Endothelial cell of umbilical vein (primary cell): ENCODE measurements at regions of chr15 and their contacts with region 1.

Region 1: DNA sequence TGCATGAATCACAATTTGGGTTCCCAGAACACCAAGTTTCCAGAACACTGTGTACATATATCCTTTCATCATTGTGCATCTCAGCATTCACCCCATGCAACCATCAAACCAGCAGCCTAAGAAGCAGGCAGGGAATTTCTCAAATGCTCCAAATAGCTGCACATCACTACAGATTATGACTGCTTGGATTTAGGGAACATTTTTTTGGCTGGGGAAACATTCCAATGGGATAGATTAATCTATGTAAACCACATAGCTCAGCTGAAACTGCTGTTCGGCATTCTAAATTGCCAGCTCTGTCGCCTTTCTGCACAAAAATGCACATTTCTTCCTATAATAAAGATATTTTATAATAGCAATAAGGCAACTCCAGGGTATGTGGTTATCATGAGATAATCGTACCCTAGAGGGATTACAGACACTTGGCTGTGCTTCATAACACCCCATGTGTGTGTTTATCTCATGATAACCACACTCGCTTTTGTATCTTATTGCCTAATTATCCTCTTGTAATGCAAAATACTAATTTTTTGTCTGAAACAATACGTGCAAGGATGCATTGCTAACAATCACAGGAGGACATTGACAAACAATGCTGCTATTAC is 483.7 kb upstream of the DPH6 start:
- DNase-seq: no peak
- H3K4me3 ChIP-seq: no peak overlapping the region
- H3K27ac ChIP-seq: no peak overlapping the region
- H3K4me1 ChIP-seq: no peaks in the 10 kb centered on the region
- H3K27me3 ChIP-seq: no peaks in the 10 kb centered on the region
- CTCF ChIP-seq: no peak
- POLR2A ChIP-seq: no peak

Region 2: DNA sequence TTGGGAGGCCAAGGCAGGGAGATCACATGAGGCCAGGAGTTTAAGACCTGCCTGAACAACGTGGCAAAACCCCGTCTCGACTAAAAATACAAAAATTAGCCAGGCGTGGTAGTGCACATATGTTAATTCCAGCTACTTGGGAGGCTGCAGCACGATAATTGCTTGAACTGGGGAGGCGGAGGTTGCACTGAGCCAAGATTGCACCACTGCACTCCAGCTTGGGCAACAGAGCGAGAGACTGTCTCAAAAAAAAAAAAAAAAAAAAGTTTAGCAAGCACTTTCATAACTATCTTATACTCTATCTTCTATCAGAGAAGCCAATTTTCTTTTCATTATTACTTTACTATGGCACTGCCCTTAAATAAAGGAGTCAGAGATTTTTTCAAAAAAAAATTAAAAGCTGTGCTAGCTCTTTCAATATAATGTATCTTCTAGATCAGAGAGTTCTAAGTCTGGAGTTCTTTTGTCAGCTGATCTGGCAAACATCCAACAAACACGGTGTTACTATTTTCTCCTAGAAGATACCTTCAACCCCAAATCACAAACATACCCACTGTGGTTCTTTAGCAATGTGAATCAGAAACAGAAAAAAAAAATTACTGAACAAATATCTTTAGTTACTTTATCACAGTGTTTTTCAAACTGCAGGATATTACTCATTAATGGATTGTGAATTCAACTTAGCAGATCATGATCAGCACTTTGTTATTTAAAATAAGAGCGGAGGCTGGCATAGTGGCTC is 1044.6 kb before region 1 on chr15:
- CTCF ChIA-PET with region 1: no interaction called
- POLR2A ChIA-PET with region 1: no interaction called
- dilution Hi-C with region 1: no loop called
- intact Hi-C with region 1: no loop called
- DNase-seq: peak; percentile 83
- H3K4me3 ChIP-seq: peak overlapping the region in 1 of 3 experiments; percentile 32
- H3K27ac ChIP-seq: peak overlapping the region; percentile 59
- H3K4me1 ChIP-seq: peaks cover 32% of the 10 kb centered on the region
- H3K27me3 ChIP-seq: no peaks in the 10 kb centered on the region
- CTCF ChIP-seq: no peak
- POLR2A ChIP-seq: no peak

Region 3: GRCh38 chr15:37015035-37015434 is 985.3 kb after region 1 on chr15:
- CTCF ChIA-PET with region 1: no interaction called
- POLR2A ChIA-PET with region 1: interaction called, 10 read pairs
- dilution Hi-C with region 1: no loop called
- intact Hi-C with region 1: no loop called
- DNase-seq: no peak
- H3K4me3 ChIP-seq: no peak overlapping the region
- H3K27ac ChIP-seq: no peak overlapping the region
- H3K4me1 ChIP-seq: no peaks in the 10 kb centered on the region
- H3K27me3 ChIP-seq: no peaks in the 10 kb centered on the region
- CTCF ChIP-seq: no peak
- POLR2A ChIP-seq: no peak